CD4-positive, alpha-beta T cell (primary cell): ENCODE measurements at regions of chr22 and their contacts with region 1.

Region 1: DNA sequence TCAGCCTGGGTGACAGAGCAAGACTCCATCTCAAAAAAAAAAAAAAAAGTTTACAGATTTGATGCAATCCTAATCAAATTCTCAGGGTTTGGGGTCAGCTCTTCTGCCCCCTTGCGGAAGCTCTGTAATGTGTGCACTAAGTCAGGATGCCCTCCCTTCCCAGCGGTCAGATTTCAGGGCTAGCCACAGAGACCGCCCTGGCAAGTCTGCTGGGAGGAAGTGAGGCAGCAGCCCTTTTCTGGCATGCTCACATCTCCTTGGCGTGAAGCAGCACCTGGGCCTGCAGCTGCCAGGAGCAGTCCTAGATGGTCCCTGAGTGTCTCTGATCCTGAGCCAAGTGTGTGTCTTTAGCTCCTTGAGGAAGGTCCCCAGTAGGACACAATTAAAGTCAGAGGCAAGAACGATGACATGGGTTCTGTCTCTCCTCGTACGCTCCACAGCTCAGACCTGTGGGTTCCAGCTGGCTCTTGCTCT is 10.9 kb upstream of the APOBEC3C start:
- DNase-seq: peak; percentile 51 to 91 (median 64)
- ATAC-seq: peak; percentile 83
- H3K4me3 ChIP-seq: no peak overlapping the region
- H3K4me3 Mint-ChIP-seq: no peak overlapping the region
- H3K27ac ChIP-seq: no peak overlapping the region
- H3K27ac Mint-ChIP-seq: no peak overlapping the region
- H3K4me1 ChIP-seq: peaks cover 16% of the 10 kb centered on the region
- H3K4me1 Mint-ChIP-seq: peaks cover 9% of the 10 kb centered on the region
- H3K27me3 ChIP-seq: no peaks in the 10 kb centered on the region
- H3K27me3 Mint-ChIP-seq: no peaks in the 10 kb centered on the region
- CTCF ChIP-seq: peak; percentile 80

Region 2: DNA sequence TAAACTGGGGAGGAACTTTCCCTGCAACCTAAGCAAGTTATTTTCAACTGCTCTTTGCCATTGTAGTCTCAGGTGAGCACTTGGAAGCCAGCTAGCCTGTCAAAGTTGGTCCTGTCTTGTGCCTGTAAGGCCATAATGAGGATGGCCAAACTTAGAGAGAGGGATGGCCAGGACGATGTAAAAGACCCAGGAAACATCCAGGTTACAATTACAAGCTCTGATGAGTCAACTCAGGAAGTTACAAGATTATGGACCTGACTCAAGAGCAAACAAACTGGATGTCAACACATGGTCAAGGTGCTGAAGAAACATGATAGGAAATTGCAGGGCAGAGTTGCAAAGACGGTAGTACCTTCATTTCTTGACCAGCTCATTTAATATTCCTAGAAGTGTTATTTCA is 295.9 kb before region 1 on chr22:
- CTCF ChIA-PET with region 1: no interaction called
- POLR2A ChIA-PET with region 1: no interaction called
- intact Hi-C with region 1: no loop called
- DNase-seq: no peak
- ATAC-seq: no peak
- H3K4me3 ChIP-seq: peak overlapping the region; percentile 96
- H3K4me3 Mint-ChIP-seq: peak overlapping the region; percentile 93
- H3K27ac ChIP-seq: peak overlapping the region in 1 of 2 donors; percentile 9
- H3K27ac Mint-ChIP-seq: peak overlapping the region; percentile 83
- H3K4me1 ChIP-seq: peaks cover 50% of the 10 kb centered on the region
- H3K4me1 Mint-ChIP-seq: peaks cover 75% of the 10 kb centered on the region
- H3K27me3 ChIP-seq: no peaks in the 10 kb centered on the region
- H3K27me3 Mint-ChIP-seq: no peaks in the 10 kb centered on the region
- CTCF ChIP-seq: no peak

Region 3: GRCh38 chr22:38872172-38872830 is 130.9 kb before region 1 on chr22 and contains the start of gene CBX6:
- CTCF ChIA-PET with region 1: interaction called, 73 read pairs
- POLR2A ChIA-PET with region 1: interaction called, 38 read pairs
- intact Hi-C with region 1: loop called (anchors 1 kb)
- DNase-seq: peak; percentile 90 to 98 (median 94)
- ATAC-seq: peak; percentile 75
- H3K4me3 ChIP-seq: peak within 1 kb of the TSS; percentile 82
- H3K4me3 Mint-ChIP-seq: peak within 1 kb of the TSS; percentile 96
- H3K27ac ChIP-seq: peak within 1 kb of the TSS; percentile 58 to 73
- H3K27ac Mint-ChIP-seq: peak within 1 kb of the TSS; percentile 92
- H3K4me1 ChIP-seq: peaks cover 62% of the 10 kb centered on the region
- H3K4me1 Mint-ChIP-seq: peaks cover 63% of the 10 kb centered on the region
- H3K27me3 ChIP-seq: no peaks in the 10 kb centered on the region
- H3K27me3 Mint-ChIP-seq: no peaks in the 10 kb centered on the region
- CTCF ChIP-seq: no peak
- total RNA-seq, gene CBX6: 41.6 to 42.8 TPM

Region 4: DNA sequence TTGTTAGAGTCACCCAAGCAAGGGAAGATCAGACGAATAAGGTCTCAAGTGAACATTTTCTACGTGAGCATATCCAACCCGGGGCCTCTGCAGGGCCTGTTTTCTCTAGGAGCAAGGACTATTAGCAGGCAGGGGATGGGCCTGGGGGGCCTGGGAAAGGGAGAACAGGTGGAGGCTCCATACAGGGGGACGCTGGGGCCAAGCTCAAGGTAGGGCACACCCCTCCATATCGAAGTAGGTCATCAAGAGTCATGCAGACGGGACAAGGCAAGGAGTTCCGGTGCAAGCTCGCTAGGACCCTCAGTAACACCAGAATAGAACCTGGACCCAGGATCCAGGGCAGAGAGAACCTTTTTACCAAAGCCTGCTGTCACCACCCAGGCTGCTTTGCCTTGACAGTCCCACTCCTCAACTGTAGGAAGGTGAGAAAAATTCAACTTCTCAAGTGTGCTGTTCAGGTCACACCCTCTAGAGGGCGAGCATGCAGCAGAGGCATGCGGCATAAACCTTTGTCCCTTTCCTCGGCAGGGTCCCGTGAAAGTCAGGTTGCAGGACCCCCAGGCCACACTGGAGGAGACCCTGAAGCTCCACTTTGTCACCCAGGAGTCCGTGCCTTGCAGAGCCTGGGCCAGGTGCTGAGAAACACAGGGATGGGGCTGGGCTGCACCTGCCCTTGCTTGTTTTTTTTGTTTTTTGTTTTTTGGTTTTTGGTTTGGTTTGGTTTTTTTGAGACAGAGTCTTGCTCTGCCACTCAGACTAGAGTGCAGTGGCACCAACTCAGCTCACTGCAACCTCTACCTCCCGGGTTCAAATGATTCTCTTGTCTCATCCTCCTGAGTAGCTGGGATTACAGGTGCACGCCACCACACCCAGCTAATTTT is 29.7 kb before region 1 on chr22:
- CTCF ChIA-PET with region 1: interaction called, 10 read pairs
- POLR2A ChIA-PET with region 1: interaction called, 5 read pairs
- intact Hi-C with region 1: loop called (anchors 1 kb)
- DNase-seq: peak; percentile 11 to 82 (median 45)
- ATAC-seq: peak; percentile 90
- H3K4me3 ChIP-seq: no peak overlapping the region
- H3K4me3 Mint-ChIP-seq: no peak overlapping the region
- H3K27ac ChIP-seq: no peak overlapping the region
- H3K27ac Mint-ChIP-seq: no peak overlapping the region
- H3K4me1 ChIP-seq: peaks cover 13% of the 10 kb centered on the region
- H3K4me1 Mint-ChIP-seq: peaks cover 4% of the 10 kb centered on the region
- H3K27me3 ChIP-seq: no peaks in the 10 kb centered on the region
- H3K27me3 Mint-ChIP-seq: peaks cover 20% of the 10 kb centered on the region
- CTCF ChIP-seq: peak; percentile 88

Region 5: GRCh38 chr22:39039306-39040126 is 36.3 kb after region 1 on chr22:
- CTCF ChIA-PET with region 1: no interaction called
- POLR2A ChIA-PET with region 1: no interaction called
- intact Hi-C with region 1: loop called in 1 of 2 experiments (anchors 5 kb)
- DNase-seq: no peak
- ATAC-seq: no peak
- H3K4me3 ChIP-seq: peak overlapping the region; percentile 67
- H3K4me3 Mint-ChIP-seq: peak overlapping the region; percentile 84
- H3K27ac ChIP-seq: peak overlapping the region in 1 of 2 donors; percentile 17
- H3K27ac Mint-ChIP-seq: peak overlapping the region; percentile 85
- H3K4me1 ChIP-seq: peaks cover 36% of the 10 kb centered on the region
- H3K4me1 Mint-ChIP-seq: peaks cover 39% of the 10 kb centered on the region
- H3K27me3 ChIP-seq: no peaks in the 10 kb centered on the region
- H3K27me3 Mint-ChIP-seq: no peaks in the 10 kb centered on the region
- CTCF ChIP-seq: no peak

Region 6: DNA sequence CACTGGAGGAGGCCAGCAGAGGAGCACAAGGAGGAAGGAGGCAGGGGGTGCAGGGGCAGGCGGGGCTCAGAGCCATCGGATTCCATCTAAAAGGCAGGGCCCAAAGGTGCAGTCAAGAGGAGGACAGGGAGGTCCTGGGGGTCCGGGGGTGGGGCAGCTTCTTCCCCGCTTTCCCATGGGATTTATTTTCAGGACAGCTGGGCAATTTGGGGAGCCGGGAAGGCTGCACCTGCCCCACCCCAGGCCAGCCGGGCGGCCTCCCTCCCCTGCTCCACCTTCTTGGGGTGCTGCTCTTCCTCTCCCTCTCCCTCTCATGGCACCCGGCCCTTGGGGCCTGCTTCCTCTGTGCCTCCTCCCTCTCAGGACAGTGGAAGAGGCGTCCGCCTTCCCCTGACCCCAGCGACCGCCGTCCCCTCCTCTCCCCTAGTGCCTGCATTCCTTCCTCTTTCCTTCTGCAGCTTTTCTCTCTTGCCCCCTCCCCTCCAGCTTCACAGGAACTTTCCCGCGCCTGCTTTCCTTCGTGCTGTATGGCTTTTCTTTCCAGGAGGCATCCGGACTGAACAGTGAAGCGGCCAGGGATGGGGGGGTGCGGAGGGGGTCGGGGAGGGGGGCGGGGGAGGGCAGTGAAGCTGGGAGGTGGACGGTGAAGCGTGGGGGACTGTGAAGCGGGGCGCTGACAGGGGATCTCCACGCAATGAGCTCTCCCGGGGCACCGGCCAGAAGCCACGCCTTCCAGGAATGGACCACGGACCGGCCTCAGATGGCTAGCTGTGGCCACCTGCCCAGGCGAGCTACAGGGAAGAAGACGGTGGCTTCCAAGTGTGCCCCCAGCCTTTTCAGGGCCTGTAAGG is 120.8 kb after region 1 on chr22:
- CTCF ChIA-PET with region 1: interaction called, 3 read pairs
- POLR2A ChIA-PET with region 1: no interaction called
- intact Hi-C with region 1: loop called (anchors 1 kb)
- DNase-seq: no peak
- ATAC-seq: no peak
- H3K4me3 ChIP-seq: no peak overlapping the region
- H3K4me3 Mint-ChIP-seq: no peak overlapping the region
- H3K27ac ChIP-seq: no peak overlapping the region
- H3K27ac Mint-ChIP-seq: no peak overlapping the region
- H3K4me1 ChIP-seq: peaks cover 2% of the 10 kb centered on the region
- H3K4me1 Mint-ChIP-seq: peaks cover 6% of the 10 kb centered on the region
- H3K27me3 ChIP-seq: no peaks in the 10 kb centered on the region
- H3K27me3 Mint-ChIP-seq: no peaks in the 10 kb centered on the region
- CTCF ChIP-seq: no peak

Region 7: GRCh38 chr22:39428578-39429071 is 425.4 kb after region 1 on chr22:
- CTCF ChIA-PET with region 1: no interaction called
- POLR2A ChIA-PET with region 1: no interaction called
- intact Hi-C with region 1: no loop called
- DNase-seq: no peak
- ATAC-seq: no peak
- H3K4me3 ChIP-seq: no peak overlapping the region
- H3K4me3 Mint-ChIP-seq: no peak overlapping the region
- H3K27ac ChIP-seq: no peak overlapping the region
- H3K27ac Mint-ChIP-seq: no peak overlapping the region
- H3K4me1 ChIP-seq: no peaks in the 10 kb centered on the region
- H3K4me1 Mint-ChIP-seq: no peaks in the 10 kb centered on the region
- H3K27me3 ChIP-seq: no peaks in the 10 kb centered on the region
- H3K27me3 Mint-ChIP-seq: no peaks in the 10 kb centered on the region
- CTCF ChIP-seq: no peak